ENCODE measurements at regions of chr19 and their contacts with region 1.

Region 1: GRCh38 chr19:46860125-46860845 is 512 bp upstream of the ARHGAP35 start:
- DNase-seq: peak; percentile 97 to 99
- H3K4me3 ChIP-seq: peak overlapping the region; percentile 60 to 69
- H3K27ac ChIP-seq: peak overlapping the region; percentile 97
- H3K4me1 ChIP-seq: peaks cover 0 to 7% of the 10 kb centered on the region in 2 donors
- H3K27me3 ChIP-seq: no peaks in the 10 kb centered on the region
- CTCF ChIP-seq: no peak
- POLR2A ChIP-seq: peak; percentile 43 to 83

Region 2: DNA sequence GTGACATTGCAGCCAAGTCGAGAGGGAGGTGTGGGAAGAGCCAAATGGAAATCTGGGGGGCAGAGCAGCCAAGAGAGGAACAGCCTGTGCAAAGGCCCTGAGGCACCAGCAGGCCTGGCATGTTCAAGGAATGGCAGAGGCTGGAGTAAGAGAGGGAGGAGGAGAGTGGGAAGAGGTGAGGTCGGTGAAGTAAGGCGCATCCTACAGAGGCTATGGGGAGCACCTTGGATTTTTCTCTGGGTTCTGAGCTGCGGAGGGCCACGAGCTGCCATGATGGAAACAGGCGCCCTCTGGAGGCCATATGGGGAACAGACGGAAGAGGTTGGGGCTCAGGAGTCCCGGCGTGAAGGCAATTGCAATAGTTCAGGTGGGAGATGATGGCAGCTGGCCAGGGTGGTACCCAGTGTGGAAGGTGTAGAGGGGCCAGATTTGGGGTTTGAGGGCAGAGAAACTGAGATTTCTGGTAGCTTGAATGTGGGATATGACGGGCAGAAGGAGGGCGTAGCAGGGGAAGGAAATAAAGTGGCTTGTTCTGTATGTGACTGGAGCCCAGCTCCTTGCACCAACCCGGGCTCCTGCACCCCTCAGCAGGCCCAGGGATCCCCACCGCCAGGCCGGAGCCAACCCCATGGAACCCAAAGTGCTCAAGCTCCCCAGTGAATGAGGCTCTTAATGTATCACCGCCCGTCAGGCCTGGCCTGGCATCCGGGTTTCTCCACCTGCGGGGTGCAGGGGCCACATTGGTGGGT is 93.5 kb before region 1 on chr19:
- intact Hi-C with region 1: no loop called
- DNase-seq: no peak
- H3K4me3 ChIP-seq: no peak overlapping the region
- H3K27ac ChIP-seq: no peak overlapping the region
- H3K4me1 ChIP-seq: no peaks in the 10 kb centered on the region
- H3K27me3 ChIP-seq: no peaks in the 10 kb centered on the region
- CTCF ChIP-seq: peak in 3 of 4 experiments; percentile 31 to 42 (median 34)
- POLR2A ChIP-seq: no peak

Region 3: DNA sequence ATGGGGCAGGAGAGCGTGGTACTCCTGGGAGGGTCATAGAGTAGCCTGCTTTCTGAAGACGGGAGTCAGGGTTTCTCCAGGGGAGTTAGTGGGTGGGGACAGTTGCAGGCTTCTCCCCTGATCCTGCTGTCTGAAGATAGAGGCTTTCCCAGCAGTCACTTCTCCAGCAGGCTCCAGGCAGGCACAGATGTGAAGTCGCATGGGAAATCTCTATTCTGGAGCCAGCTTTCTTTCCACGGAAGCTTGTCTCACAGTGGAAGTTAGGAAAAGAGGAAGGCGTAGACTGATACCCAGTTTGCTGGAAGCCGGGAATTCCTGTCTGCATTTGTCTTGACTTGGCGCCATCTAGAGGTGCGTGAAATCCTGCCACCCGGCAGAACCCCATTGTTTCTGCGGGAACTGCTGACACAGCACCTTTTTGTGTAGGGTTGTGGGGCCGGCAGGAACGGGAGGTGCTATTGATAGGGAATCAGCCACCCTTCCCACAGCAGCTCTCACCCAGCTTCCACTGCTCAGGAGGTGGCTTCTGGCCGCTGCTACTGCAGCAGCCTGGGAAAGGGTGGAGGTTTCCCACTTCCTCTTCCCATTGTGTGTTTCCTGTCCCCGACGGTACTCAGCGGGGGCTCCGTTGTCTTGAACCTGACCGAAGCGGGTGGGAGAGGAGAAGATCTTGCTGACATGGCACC is 130.8 kb after region 1 on chr19:
- intact Hi-C with region 1: loop called (anchors 5 kb)
- DNase-seq: peak; percentile 89 to 90
- H3K4me3 ChIP-seq: no peak overlapping the region
- H3K27ac ChIP-seq: peak overlapping the region; percentile 54 to 81
- H3K4me1 ChIP-seq: peaks cover 0 to 5% of the 10 kb centered on the region in 2 donors
- H3K27me3 ChIP-seq: no peaks in the 10 kb centered on the region
- CTCF ChIP-seq: peak; percentile 85 to 93 (median 92)
- POLR2A ChIP-seq: peak in 1 of 2 donors; percentile 8